ENCODE measurements at regions of chr3 and their contacts with region 1.

Region 1: DNA sequence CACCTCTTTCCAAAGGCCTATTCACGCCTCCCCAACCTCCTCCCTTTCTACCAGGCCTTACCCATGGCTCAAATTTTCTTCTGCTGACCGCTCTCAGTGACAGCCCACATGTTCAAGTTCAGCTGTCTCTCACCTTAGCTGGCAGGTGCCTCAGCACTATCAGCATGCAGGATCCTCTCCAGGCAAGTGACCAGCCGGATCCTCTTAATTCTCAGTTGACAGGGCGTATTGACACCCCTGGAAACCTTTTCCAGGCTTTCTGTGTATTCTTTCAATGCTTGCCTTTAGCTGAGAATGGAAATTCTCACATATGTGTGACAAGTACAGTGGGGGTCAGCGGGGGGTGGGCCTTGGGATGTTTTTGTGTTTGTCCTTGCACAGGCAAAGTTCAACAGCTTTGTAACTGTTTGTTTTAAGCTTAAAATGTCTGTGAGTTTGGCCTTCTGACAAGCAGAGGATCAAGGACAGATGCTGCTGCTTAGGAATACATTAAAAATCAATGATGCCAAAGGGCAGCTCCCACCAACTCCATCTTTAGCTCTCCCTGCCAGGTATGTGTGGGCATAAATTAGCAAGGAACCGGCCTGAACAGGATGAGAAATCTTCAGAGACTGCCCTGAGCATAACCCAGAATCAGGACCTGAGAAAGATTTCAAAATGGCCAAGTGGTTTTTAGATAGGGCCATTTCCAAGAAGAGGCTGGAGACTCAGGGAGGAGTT is 17.4 kb upstream of the BDH1 start:
- DNase-seq: peak; percentile 94
- ATAC-seq: peak; percentile 89
- H3K4me3 ChIP-seq: peak overlapping the region; percentile 58 to 69 (median 64)
- H3K27ac ChIP-seq: peak overlapping the region; percentile 84
- H3K4me1 ChIP-seq: peaks cover 90% of the 10 kb centered on the region
- H3K27me3 ChIP-seq: no peaks in the 10 kb centered on the region
- CTCF ChIP-seq: no peak
- EP300 ChIP-seq: peak; percentile 31 to 96; a peak in 2 of 4 replicates
- POLR2A ChIP-seq: peak in 1 of 2 experiments; percentile 46; a peak in 1 of 4 replicates
- RAD21 ChIP-seq: no peak

Region 2: DNA sequence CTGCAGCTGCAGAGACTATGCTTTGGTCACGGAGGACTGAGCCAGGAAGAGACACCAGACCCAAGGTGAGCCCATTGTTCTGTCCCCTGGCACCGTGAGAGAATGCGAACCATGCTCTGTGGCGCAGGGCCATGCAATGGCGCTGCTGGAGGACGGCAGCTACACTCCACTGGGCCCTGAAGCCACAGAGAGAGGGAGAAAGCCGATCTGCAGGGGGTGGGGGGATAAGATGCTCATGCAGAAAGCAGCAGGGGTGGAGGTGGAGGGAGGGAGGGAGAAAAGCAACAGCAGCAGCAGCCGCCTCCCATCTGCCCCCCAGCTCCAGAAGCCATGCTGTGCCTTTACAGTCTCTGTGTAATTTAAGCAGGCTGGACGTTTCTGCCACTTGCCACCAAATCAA is 22.7 kb before region 1 on chr3:
- CTCF ChIA-PET with region 1: no interaction called
- POLR2A ChIA-PET with region 1: no interaction called
- in situ Hi-C with region 1: no loop called
- intact Hi-C with region 1: no loop called
- DNase-seq: no peak
- ATAC-seq: no peak
- H3K4me3 ChIP-seq: no peak overlapping the region
- H3K27ac ChIP-seq: no peak overlapping the region
- H3K4me1 ChIP-seq: peaks cover 18% of the 10 kb centered on the region
- H3K27me3 ChIP-seq: no peaks in the 10 kb centered on the region
- CTCF ChIP-seq: no peak
- EP300 ChIP-seq: no peak
- POLR2A ChIP-seq: 0 out of 4 replicates have a peak, but pooled peaks of 1 of the 2 experiments have one; percentile 20
- RAD21 ChIP-seq: no peak

Region 3: GRCh38 chr3:197562398-197563251 is 10.6 kb before region 1 on chr3:
- CTCF ChIA-PET with region 1: no interaction called
- POLR2A ChIA-PET with region 1: interaction called, 33 read pairs
- in situ Hi-C with region 1: no loop called
- intact Hi-C with region 1: no loop called
- DNase-seq: no peak
- ATAC-seq: peak; percentile 48
- H3K4me3 ChIP-seq: no peak overlapping the region
- H3K27ac ChIP-seq: peak overlapping the region; percentile 40
- H3K4me1 ChIP-seq: peaks cover 65% of the 10 kb centered on the region
- H3K27me3 ChIP-seq: no peaks in the 10 kb centered on the region
- CTCF ChIP-seq: no peak
- EP300 ChIP-seq: 0 out of 4 replicates have a peak, but pooled peaks of 1 of the 2 experiments have one; percentile 23
- POLR2A ChIP-seq: no peak
- RAD21 ChIP-seq: no peak

Region 4: DNA sequence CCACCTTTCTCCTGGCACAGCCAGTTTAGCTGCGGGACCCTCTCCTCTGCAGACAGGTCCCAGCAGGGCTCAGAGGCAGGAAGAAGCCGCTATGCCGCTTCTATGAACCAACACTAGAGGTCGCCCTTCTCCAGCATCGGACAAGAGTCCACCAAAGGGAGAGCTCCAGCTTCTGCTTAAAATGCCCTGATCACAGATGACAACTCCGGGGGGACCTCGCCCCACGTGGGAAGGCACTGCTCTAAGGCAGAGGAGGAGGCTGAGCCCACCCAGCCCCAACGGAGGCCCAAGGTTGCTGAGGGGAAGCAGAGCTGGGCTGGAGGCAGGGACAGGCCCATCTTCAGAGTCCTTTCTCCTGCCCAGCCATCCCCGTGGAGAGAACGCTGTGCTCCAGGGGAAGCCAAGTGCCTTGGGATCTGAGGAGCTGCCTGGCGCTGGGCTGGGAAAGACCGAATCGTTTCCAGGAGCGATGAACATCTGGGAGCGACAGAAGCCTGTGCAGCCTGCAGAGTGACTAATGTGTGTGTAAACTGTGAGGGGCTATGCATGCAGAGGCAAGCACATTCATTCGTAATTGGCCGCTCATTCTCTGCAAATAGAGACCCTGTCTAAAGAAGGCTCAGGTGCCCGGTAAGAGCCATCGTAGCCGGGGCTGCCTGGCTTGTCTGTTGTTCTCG is 26.0 kb after region 1 on chr3:
- CTCF ChIA-PET with region 1: no interaction called
- POLR2A ChIA-PET with region 1: interaction called, 10 read pairs
- in situ Hi-C with region 1: no loop called
- intact Hi-C with region 1: no loop called
- DNase-seq: peak; percentile 70
- ATAC-seq: peak; percentile 89
- H3K4me3 ChIP-seq: peak overlapping the region in 1 of 3 experiments; percentile 27; a peak in 1 of 6 replicates
- H3K27ac ChIP-seq: peak overlapping the region; percentile 6
- H3K4me1 ChIP-seq: peaks cover 54% of the 10 kb centered on the region
- H3K27me3 ChIP-seq: no peaks in the 10 kb centered on the region; a peak in 1 of 5 replicates
- CTCF ChIP-seq: peak; percentile 96
- EP300 ChIP-seq: no peak
- POLR2A ChIP-seq: no peak
- RAD21 ChIP-seq: peak; percentile 81

Measured in HepG2 (cell line).